ENCODE measurements at regions of chr5 and their contacts with region 1.

Region 1: DNA sequence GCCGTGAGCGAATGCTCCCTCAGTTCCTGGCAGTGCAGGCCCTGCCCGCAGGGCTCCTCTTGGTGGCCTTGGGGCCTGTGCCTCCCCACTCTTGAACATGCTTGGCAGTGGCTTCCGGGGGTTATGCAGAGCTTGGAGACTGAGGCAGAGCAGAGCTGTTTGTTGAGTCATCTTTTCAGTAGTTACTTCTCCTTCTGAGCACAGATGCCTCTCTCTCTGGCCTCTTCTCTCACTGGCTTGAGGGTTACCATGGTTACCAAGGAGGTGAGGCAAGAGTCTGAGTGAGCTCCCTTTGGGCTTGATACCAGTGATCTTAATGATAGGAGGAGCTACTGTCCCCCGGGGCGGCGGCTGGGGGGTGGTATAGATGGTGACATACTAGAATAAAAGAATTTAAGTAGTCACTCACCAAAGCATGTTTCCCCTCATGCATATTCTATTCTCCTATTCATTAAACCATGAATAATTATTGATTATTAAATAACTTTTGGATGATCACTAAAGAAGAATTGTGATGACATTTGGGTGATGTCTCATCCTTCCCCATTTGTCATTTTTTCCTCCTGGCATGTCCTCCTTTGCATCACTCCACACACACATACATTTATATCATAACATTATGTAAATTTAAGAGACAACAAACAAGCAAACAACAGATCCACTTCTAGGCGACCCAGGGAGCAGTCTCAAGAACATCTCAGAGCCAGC is 111.1 kb downstream of the ARHGAP26 start:
- DNase-seq: no peak

Region 2: GRCh38 chr5:142716963-142717362 is 164.3 kb before region 1 on chr5:
- intact Hi-C with region 1: loop called (anchors 2 to 5 kb)
- DNase-seq: peak; percentile 78

Region 3: DNA sequence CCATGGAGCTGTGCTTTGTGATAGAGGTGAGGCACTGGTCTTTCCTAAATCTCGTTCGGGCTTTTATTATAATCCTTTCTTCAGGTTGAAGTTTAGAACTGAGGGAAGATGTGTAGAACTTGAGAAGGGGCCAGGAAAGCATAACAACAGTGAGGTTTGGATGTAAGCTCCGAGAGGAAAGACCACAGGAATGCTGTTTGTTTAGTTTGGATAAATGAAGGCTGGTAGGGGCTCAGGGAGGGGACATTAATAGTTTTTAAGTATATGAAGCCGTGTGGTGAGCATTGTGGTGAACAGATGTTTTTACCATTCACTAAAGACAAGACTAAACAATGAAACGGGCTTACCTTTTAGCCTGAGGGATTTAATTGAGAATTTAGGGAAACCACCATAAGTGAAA is 19.7 kb after region 1 on chr5:
- intact Hi-C with region 1: no loop called
- DNase-seq: no peak